Mammary epithelial cell (primary cell): ENCODE measurements at regions of chr1 and their contacts with region 1.

Region 1: DNA sequence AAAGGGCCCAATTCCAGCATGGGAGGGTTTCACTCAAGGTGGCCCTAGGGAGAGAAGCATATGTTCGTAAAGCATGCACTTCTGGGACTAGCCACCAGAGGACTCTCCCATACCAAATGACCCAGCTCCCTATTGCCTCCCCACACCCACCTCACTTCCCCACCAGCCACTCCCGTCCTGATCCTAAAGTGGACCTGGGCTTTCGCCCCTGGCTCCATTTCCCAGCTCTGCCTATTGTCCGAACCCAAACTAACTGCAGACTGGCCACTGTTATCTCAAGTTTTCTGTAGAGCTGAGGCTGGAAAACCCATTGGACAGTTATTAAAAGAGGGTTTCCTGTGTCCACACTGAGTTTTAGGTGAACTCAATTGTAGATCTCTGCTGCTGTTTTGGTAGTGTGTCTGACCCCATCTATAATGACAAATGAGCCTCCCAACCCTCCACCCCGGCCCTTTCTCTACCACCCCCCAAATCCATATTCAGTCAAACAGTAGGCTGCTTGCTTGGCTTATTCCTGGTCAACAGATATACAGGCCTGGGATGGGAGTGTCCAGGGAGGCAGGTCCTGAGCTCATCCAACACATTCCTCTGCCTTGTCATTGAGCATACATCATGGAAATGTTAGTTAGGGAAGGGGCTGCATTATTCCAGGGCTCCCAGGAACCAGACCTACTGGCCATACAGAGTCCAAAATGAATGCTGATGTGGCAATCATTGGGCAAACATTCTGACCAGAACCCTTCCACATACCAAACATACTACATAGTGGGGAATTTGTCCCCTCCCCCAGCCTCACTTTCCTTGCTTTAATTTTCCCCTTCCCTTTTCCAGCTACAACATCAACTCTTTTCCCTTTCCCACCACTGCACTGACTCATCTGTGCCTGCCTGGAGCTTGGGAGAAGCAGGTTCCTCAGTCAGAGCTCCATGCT is 59.2 kb downstream of the ABCA4 start:
- DNase-seq: peak; percentile 47
- H3K4me3 ChIP-seq: no peak overlapping the region
- H3K27ac ChIP-seq: no peak overlapping the region
- H3K4me1 ChIP-seq: peaks cover 7% of the 10 kb centered on the region
- H3K27me3 ChIP-seq: no peaks in the 10 kb centered on the region
- CTCF ChIP-seq: peak; percentile 92 to 96

Region 2: GRCh38 chr1:94025383-94026340 is 36.1 kb before region 1 on chr1:
- CTCF ChIA-PET with region 1: interaction called, 4 read pairs
- dilution Hi-C with region 1: no loop called
- in situ Hi-C with region 1: no loop called
- intact Hi-C with region 1: loop called (anchors 1 kb)
- DNase-seq: peak; percentile 63
- H3K4me3 ChIP-seq: no peak overlapping the region
- H3K27ac ChIP-seq: no peak overlapping the region
- H3K4me1 ChIP-seq: peaks cover 60% of the 10 kb centered on the region
- H3K27me3 ChIP-seq: no peaks in the 10 kb centered on the region
- CTCF ChIP-seq: peak; percentile 68 to 74

Region 3: GRCh38 chr1:94111879-94112278 is 50.1 kb after region 1 on chr1:
- CTCF ChIA-PET with region 1: no interaction called
- dilution Hi-C with region 1: no loop called
- in situ Hi-C with region 1: no loop called
- intact Hi-C with region 1: no loop called
- DNase-seq: no peak
- H3K4me3 ChIP-seq: no peak overlapping the region
- H3K27ac ChIP-seq: no peak overlapping the region
- H3K4me1 ChIP-seq: peaks cover 5% of the 10 kb centered on the region
- H3K27me3 ChIP-seq: no peaks in the 10 kb centered on the region
- CTCF ChIP-seq: no peak

Region 4: GRCh38 chr1:94160811-94161210 is 99.0 kb after region 1 on chr1:
- CTCF ChIA-PET with region 1: interaction called, 3 read pairs
- dilution Hi-C with region 1: no loop called
- in situ Hi-C with region 1: no loop called
- intact Hi-C with region 1: loop called (anchors 5 kb)
- DNase-seq: peak; percentile 32
- H3K4me3 ChIP-seq: no peak overlapping the region
- H3K27ac ChIP-seq: no peak overlapping the region
- H3K4me1 ChIP-seq: no peaks in the 10 kb centered on the region
- H3K27me3 ChIP-seq: no peaks in the 10 kb centered on the region
- CTCF ChIP-seq: no peak

Region 5: DNA sequence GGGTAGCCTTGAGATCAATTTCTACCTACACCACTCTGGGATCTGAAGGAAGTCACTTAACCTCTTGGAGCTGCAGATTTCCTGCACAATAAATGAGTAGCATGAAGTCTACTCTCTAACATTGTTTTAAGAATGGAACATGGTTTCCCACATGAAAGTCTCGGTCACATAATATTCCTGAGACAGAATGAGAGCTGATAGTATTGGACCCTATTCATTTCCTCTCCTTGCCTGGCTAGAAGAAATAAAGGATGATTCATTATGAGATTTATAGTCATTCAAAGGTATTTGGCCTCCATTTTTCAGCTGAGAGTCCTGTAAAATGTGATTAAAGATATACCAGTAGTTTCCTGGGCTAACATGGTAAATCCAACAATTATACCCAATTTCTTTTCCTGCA is 118.9 kb after region 1 on chr1:
- CTCF ChIA-PET with region 1: no interaction called
- dilution Hi-C with region 1: no loop called
- in situ Hi-C with region 1: loop called in 1 of 2 experiments (anchors 10 kb)
- intact Hi-C with region 1: no loop called
- DNase-seq: no peak
- H3K4me3 ChIP-seq: no peak overlapping the region
- H3K27ac ChIP-seq: no peak overlapping the region
- H3K4me1 ChIP-seq: no peaks in the 10 kb centered on the region
- H3K27me3 ChIP-seq: no peaks in the 10 kb centered on the region
- CTCF ChIP-seq: no peak

Region 6: DNA sequence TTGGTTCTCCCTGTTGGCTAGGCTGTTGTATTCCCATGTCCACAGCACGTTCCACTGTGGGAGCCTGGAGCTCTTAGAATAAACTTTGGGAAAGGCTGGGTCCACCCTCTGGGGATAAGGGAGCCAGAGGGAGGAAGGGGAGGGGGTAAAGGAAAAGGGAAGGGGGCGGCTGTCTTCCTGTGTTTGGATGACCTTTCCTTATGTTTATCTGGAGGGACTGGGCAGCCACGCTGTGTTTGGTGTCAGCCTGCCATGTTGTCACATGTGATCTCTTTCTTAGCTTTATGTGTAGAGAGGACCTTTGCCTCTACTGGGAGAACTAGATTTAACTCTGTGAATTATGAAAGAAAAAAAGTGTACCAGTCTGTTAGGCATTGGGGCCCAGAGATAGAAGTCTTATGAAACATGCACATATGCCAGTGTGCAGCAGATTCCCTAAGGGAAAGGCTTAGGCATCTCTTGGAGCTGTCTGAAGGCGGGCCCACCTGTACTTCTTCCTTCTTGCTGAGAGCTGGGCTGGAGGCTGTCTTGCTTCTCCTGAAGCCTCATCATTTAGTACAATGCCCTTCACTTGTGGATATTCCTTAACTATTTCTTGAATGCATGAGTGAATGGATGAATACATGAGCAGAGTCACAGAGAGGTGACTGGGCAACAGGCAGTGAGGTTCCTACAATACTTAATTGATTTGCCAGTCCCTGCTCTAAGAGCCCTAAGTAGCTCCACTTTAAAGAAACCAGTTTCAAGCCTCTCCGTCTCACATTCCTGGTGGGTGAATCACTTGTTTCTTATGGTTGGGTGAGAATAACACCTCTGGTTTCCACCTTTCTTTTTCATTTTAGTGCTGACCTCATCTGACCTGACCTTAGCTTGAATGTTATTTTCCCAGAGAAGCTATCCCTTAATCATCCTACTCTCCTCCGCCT is 238.1 kb after region 1 on chr1:
- CTCF ChIA-PET with region 1: no interaction called
- dilution Hi-C with region 1: no loop called
- in situ Hi-C with region 1: no loop called
- intact Hi-C with region 1: no loop called
- DNase-seq: peak; percentile 96
- H3K4me3 ChIP-seq: no peak overlapping the region
- H3K27ac ChIP-seq: peak overlapping the region; percentile 70
- H3K4me1 ChIP-seq: peaks cover 44% of the 10 kb centered on the region
- H3K27me3 ChIP-seq: no peaks in the 10 kb centered on the region
- CTCF ChIP-seq: no peak

Region 7: GRCh38 chr1:94329986-94330385 is 268.2 kb after region 1 on chr1:
- CTCF ChIA-PET with region 1: interaction called, 35 read pairs
- dilution Hi-C with region 1: no loop called
- in situ Hi-C with region 1: loop called in 1 of 2 experiments (anchors 5 kb)
- intact Hi-C with region 1: loop called (anchors 1 kb)
- DNase-seq: no peak
- H3K4me3 ChIP-seq: no peak overlapping the region
- H3K27ac ChIP-seq: no peak overlapping the region
- H3K4me1 ChIP-seq: peaks cover 45% of the 10 kb centered on the region
- H3K27me3 ChIP-seq: no peaks in the 10 kb centered on the region
- CTCF ChIP-seq: peak; percentile 28 to 44

Region 8: DNA sequence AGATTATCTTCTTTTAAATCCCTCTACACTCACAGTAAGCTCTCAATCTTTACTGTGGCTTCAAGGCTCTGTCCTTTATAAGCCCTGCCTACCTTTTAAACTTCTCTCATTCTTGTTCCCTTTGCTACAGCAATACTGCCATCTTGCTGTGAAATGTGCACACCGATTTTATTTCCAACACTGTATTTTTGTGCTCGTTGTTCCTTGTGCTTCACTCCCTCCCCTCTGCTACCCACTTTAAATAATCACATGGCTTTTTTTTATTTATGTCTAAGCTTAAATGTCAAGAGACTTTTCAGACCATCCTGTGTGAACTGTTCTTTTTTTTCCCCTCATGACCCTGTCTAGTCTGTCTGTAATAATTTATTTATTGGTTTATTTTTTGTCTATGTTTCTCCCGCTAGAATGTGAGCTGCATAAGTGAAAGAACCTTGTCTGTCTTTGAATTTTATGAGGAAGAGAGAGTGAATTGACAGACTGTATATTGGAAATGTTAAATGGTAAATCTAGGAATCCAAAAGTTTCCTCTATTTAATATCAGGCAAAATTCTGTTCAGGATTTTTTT is 402.1 kb after region 1 on chr1:
- CTCF ChIA-PET with region 1: no interaction called
- dilution Hi-C with region 1: no loop called
- in situ Hi-C with region 1: no loop called
- intact Hi-C with region 1: loop called (anchors 2 kb)
- DNase-seq: peak; percentile 55
- H3K4me3 ChIP-seq: no peak overlapping the region
- H3K27ac ChIP-seq: no peak overlapping the region
- H3K4me1 ChIP-seq: no peaks in the 10 kb centered on the region
- H3K27me3 ChIP-seq: no peaks in the 10 kb centered on the region
- CTCF ChIP-seq: peak; percentile 43 to 58